Tibial artery (tissue), 4 donors: ENCODE measurements at regions of chr11 and their contacts with region 1.

Region 1: GRCh38 chr11:64204464-64204989 is 2.0 kb upstream of the FERMT3 start:
- DNase-seq: peak; percentile 88 to 93
- H3K4me3 ChIP-seq: no peak overlapping the region
- H3K27ac ChIP-seq: no peak overlapping the region
- H3K4me1 ChIP-seq: peaks cover 0 to 8% (median 2%) of the 10 kb centered on the region in 4 donors
- H3K27me3 ChIP-seq: no peaks in the 10 kb centered on the region
- CTCF ChIP-seq: peak; percentile 68 to 71

Region 2: GRCh38 chr11:64269380-64270234 is 65.1 kb after region 1 on chr11:
- intact Hi-C with region 1: loop called (anchors 5 kb)
- DNase-seq: peak; percentile 98 to 99
- H3K4me3 ChIP-seq: peak overlapping the region; percentile 60 to 77
- H3K27ac ChIP-seq: peak overlapping the region; percentile 84 to 96
- H3K4me1 ChIP-seq: peaks cover 6 to 35% (median 22%) of the 10 kb centered on the region in 4 donors
- H3K27me3 ChIP-seq: no peaks in the 10 kb centered on the region
- CTCF ChIP-seq: no peak

Region 3: DNA sequence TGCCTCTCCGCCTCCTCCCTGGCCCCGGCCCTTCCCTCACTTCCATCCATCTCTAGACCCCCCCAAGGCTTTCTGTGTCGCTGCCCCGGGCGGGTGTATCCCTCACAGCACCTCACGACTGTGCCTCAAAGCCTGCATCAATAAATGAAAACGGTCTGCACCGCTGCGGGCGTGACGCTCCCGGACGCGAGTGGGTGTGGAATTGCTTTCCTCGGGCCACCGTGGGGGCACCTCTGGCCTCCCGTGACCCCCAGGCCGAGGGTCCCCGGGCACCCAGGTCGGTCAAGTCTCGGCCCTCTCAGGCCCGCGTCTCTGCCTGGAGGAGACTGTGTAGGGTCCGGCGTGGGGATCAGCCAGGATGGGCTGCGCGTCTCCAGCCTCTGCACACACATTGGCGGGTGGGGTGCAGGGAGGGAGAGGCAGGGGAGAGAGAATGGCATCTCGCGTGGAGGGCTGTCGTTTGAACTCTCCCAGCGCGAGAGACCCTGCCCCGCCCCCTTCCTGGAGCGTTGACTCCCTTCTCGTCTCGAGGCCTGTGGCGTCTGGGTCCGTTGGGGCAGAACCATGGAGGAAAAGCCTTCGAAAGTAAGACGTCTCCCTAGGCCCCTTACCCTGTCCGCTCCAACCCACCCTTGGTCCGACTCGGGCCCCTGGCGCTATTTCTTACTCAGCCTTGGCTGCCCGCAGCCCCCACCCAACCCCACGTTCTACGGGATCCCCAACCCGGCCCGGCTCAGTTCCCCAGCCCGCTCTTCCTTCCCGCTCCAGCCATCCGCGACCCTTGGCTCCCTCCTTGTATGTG is 95.5 kb after region 1 on chr11 and contains the start of gene CATSPERZ:
- intact Hi-C with region 1: loop called (anchors 2 kb)
- DNase-seq: no peak
- H3K4me3 ChIP-seq: peak within 1 kb of the TSS; percentile 43 to 53
- H3K27ac ChIP-seq: peak within 1 kb of the TSS; percentile 3 to 60
- H3K4me1 ChIP-seq: peaks cover 0 to 38% (median 28%) of the 10 kb centered on the region in 4 donors
- H3K27me3 ChIP-seq: peaks cover 0 to 69% of the 10 kb centered on the region in 2 donors
- CTCF ChIP-seq: no peak